A549 (cell line): ENCODE measurements at regions of chr7 and their contacts with region 1.

Region 1: DNA sequence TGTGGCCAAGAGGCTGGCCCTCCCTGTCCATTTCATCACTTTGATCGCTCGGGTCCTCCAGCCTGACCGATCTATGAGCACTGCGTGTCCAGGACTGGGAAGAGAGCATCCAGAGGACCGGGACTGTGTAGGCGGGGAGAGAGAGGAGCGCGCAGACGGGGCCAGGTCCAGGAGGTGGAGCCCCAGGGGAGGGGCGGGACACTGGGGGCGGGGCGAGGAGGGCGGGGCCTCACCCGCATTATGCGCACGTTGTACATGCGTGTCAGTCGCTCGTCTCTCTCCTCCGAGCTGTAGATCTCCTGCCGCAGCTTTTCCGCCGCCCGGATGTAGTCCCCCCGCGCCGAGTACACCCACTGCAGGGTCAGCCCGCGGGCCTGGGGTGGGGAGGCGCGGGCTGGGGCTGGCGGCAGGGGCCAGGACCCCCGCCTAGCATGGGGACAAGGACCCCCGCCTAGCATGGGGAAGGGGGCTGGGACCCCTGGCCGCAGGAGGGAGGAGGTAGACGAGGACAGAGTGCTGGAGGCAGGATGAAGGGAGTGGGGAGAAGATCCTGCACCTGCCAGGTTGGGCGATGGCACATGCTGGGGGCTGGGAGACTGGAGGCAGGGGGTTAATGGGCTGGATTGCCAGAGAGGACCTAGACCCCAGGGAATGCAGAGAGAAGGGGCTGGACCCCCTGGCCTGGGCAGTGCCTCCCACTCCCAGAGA is 14.3 kb downstream of the MOSPD3 start:
- DNase-seq: peak; percentile 85 to 98
- ATAC-seq: peak; percentile 93 to 96
- H3K4me3 ChIP-seq: peak overlapping the region; percentile 37
- H3K27ac ChIP-seq: peak overlapping the region; percentile 65 to 89; a peak in 5 of 6 replicates
- H3K4me1 ChIP-seq: 0 out of 3 replicates have a peak, but pooled peaks cover 4% of the 10 kb centered on the region
- CTCF ChIP-seq: no peak
- EP300 ChIP-seq: no peak
- POLR2A ChIP-seq: no peak
- RAD21 ChIP-seq: no peak

Region 2: GRCh38 chr7:100611974-100612729 is 14.5 kb before region 1 on chr7 and contains the start of gene MOSPD3:
- CTCF ChIA-PET with region 1: interaction called, 69 read pairs
- POLR2A ChIA-PET with region 1: interaction called, 10 read pairs
- DNase-seq: peak; percentile 99 to 100
- ATAC-seq: peak; percentile 97
- H3K4me3 ChIP-seq: peak within 1 kb of the TSS; percentile 67
- H3K27ac ChIP-seq: peak within 1 kb of the TSS; percentile 83 to 90
- H3K4me1 ChIP-seq: peaks cover 4% of the 10 kb centered on the region; the same call in 1 of the 3 replicates
- CTCF ChIP-seq: no peak
- EP300 ChIP-seq: no peak
- POLR2A ChIP-seq: peak; percentile 43
- RAD21 ChIP-seq: no peak
- polyA plus RNA-seq, gene MOSPD3: 4.6 and 6.1 TPM in 2 replicates

Region 3: GRCh38 chr7:100662377-100662776 is 35.7 kb after region 1 on chr7:
- CTCF ChIA-PET with region 1: interaction called, 11 read pairs
- POLR2A ChIA-PET with region 1: no interaction called
- DNase-seq: no peak
- ATAC-seq: no peak
- H3K4me3 ChIP-seq: no peak overlapping the region
- H3K27ac ChIP-seq: no peak overlapping the region
- H3K4me1 ChIP-seq: no peaks in the 10 kb centered on the region
- CTCF ChIP-seq: no peak
- EP300 ChIP-seq: no peak
- POLR2A ChIP-seq: no peak
- RAD21 ChIP-seq: no peak